Vagina (tissue), 2 donors: ENCODE measurements at regions of chr12 and their contacts with region 1.

Region 1: DNA sequence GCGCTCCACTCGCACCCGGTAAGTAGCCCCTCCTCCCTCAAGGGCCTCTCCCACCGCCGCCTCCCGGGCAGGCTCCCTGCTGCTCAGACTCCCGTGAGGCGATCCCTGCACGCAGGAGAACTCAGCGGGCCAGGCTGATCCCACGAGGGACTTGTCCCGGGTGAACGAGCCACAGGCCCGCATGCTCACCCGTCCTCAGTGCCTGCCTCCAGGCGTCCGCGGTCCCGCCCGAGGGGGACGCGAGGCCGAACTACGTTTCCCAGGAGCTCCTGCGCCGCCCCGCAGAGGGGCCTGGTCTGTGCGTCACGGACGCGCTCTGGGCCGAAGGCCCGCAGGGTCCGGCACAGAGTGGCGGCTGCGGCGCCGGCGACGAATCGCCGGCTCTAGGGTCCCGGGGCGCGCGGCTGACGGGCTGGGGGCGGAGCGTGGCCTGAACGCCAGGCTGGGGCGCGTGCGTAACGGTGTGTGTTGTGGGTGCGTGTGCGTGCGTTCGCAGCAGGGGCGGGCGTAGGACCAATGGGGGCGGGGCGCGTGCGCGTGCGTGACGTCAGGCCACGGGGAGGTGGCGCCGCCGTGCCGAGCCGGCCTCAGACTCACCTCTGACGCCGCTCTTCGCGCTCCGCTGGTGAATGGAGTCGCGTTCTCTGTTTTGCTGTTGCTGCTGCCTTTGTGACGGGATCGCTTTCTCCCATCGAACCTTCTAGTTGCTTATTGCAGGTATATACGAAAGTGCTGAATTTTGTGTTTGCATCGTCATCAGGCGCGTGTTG is at the starts of genes ZNF10 and ZNF891:
- DNase-seq: peak; percentile 95 to 96
- H3K4me3 ChIP-seq: peak within 1 kb of the TSS; percentile 92 to 99
- H3K27ac ChIP-seq: peak within 1 kb of the TSS; percentile 94
- H3K4me1 ChIP-seq: peaks cover 6% of the 10 kb centered on the region
- H3K27me3 ChIP-seq: no peaks in the 10 kb centered on the region
- CTCF ChIP-seq: peak in 1 of 3 experiments; percentile 17
- POLR2A ChIP-seq: peak in 1 of 2 donors; percentile 57
- total RNA-seq, gene ZNF10: 10.8 TPM
- total RNA-seq, gene ZNF891: 3.4 TPM

Region 2: GRCh38 chr12:133080368-133081158 is 49.7 kb before region 1 on chr12 and contains the start of gene ZNF140:
- intact Hi-C with region 1: loop called (anchors 5 kb)
- DNase-seq: peak in 1 of 2 donors; percentile 95
- H3K4me3 ChIP-seq: peak within 1 kb of the TSS; percentile 75 to 80
- H3K27ac ChIP-seq: peak within 1 kb of the TSS; percentile 97
- H3K4me1 ChIP-seq: peaks cover 12% of the 10 kb centered on the region
- H3K27me3 ChIP-seq: no peaks in the 10 kb centered on the region
- CTCF ChIP-seq: peak in 1 of 3 experiments; percentile 17
- POLR2A ChIP-seq: no peak
- total RNA-seq, gene ZNF140: 9.3 TPM

Region 3: GRCh38 chr12:133181238-133181959 is 51.2 kb after region 1 on chr12 and contains the start of gene ZNF268:
- intact Hi-C with region 1: loop called (anchors 2 kb)
- DNase-seq: no peak
- H3K4me3 ChIP-seq: peak within 1 kb of the TSS; percentile 81 to 88
- H3K27ac ChIP-seq: peak within 1 kb of the TSS; percentile 47
- H3K4me1 ChIP-seq: peaks cover 13% of the 10 kb centered on the region
- H3K27me3 ChIP-seq: no peaks in the 10 kb centered on the region
- CTCF ChIP-seq: peak; percentile 55 to 72 (median 61)
- POLR2A ChIP-seq: no peak
- total RNA-seq, gene ZNF268: 9.1 TPM